Esophagus squamous epithelium (tissue), 5 donors: ENCODE measurements at regions of chr4 and their contacts with region 1.

Region 1: GRCh38 chr4:78517050-78517652 is 34.4 kb upstream of the ANXA3 start:
- DNase-seq: no peak
- H3K4me3 ChIP-seq: no peak overlapping the region
- H3K27ac ChIP-seq: no peak overlapping the region
- H3K4me1 ChIP-seq: peaks cover 0 to 6% (median 0%) of the 10 kb centered on the region in 3 donors
- H3K27me3 ChIP-seq: no peaks in the 10 kb centered on the region
- CTCF ChIP-seq: peak; percentile 19 to 71 (median 48)
- POLR2A ChIP-seq: no peak

Region 2: DNA sequence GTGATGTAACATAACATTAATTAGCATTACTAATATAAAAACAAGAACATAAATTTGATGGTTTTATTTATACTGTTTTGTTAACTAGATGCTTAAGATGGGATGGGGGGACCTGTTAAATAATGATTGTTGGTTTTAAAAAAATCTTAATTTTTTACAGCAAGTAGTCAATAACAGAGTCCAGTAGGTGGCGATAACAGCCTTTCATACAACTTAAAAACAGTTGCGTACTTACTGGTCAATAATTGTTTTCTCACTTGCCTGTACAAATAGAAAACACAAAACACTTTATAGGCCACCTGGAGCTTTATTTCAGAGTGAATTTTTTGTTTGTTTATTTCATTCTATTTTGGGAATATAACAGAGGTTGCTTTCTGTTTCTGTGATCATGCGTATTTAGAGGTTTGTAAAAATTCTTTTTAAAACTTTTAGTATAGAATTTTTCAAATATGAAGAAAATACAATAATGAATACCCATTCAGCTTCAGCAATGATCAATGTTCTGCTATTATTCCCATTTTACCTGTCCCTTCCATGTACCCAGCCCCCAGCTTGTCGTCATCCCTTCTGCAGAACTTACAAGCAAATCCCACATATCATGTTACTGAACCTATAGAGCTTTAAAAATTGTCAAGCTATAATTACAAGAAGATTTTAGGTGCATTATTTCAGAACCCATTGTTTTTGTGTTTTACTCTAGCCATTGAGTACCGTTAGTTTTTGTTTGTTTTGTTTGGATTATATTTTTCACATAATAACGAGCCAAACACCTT is 557.4 kb before region 1 on chr4:
- intact Hi-C with region 1: loop called (anchors 10 kb)
- DNase-seq: no peak
- H3K4me3 ChIP-seq: no peak overlapping the region
- H3K27ac ChIP-seq: no peak overlapping the region
- H3K4me1 ChIP-seq: no peaks in the 10 kb centered on the region
- H3K27me3 ChIP-seq: no peaks in the 10 kb centered on the region
- CTCF ChIP-seq: peak in 5 of 6 experiments; percentile 27 to 77 (median 57)
- POLR2A ChIP-seq: no peak

Region 3: GRCh38 chr4:78061939-78062570 is 455.1 kb before region 1 on chr4:
- intact Hi-C with region 1: loop called (anchors 10 kb)
- DNase-seq: no peak
- H3K4me3 ChIP-seq: no peak overlapping the region
- H3K27ac ChIP-seq: peak overlapping the region in 2 of 4 donors; percentile 20 to 25
- H3K4me1 ChIP-seq: peaks cover 13 to 45% (median 26%) of the 10 kb centered on the region in 3 donors
- H3K27me3 ChIP-seq: peaks cover 0 to 28% (median 0%) of the 10 kb centered on the region in 4 donors
- CTCF ChIP-seq: no peak
- POLR2A ChIP-seq: no peak

Region 4: DNA sequence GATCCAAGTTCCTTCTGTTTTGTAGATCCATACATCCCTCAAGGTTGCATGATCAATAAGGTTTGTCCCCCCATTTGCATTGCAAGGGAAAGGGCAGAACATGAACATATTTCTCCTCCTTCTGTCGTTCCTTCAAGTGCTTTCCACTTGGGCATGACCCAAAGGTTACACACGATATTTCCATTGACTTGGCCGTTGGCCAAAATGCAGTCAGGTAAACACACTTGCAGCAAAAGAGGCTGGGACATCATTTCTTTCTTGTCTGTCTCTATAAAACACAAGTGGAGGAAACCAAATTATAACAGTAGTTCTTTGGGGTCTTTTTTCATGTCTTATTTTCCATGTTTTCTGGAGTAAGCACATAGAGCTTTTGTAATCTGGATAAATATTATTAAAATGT is 303.9 kb before region 1 on chr4:
- intact Hi-C with region 1: no loop called
- DNase-seq: no peak
- H3K4me3 ChIP-seq: no peak overlapping the region
- H3K27ac ChIP-seq: no peak overlapping the region
- H3K4me1 ChIP-seq: peaks cover 0 to 21% (median 0%) of the 10 kb centered on the region in 3 donors
- H3K27me3 ChIP-seq: no peaks in the 10 kb centered on the region
- CTCF ChIP-seq: no peak
- POLR2A ChIP-seq: no peak

Region 5: GRCh38 chr4:78293821-78294301 is 223.3 kb before region 1 on chr4:
- intact Hi-C with region 1: no loop called
- DNase-seq: no peak
- H3K4me3 ChIP-seq: no peak overlapping the region
- H3K27ac ChIP-seq: no peak overlapping the region
- H3K4me1 ChIP-seq: peaks cover 0 to 16% (median 0%) of the 10 kb centered on the region in 3 donors
- H3K27me3 ChIP-seq: no peaks in the 10 kb centered on the region
- CTCF ChIP-seq: no peak
- POLR2A ChIP-seq: no peak

Region 6: DNA sequence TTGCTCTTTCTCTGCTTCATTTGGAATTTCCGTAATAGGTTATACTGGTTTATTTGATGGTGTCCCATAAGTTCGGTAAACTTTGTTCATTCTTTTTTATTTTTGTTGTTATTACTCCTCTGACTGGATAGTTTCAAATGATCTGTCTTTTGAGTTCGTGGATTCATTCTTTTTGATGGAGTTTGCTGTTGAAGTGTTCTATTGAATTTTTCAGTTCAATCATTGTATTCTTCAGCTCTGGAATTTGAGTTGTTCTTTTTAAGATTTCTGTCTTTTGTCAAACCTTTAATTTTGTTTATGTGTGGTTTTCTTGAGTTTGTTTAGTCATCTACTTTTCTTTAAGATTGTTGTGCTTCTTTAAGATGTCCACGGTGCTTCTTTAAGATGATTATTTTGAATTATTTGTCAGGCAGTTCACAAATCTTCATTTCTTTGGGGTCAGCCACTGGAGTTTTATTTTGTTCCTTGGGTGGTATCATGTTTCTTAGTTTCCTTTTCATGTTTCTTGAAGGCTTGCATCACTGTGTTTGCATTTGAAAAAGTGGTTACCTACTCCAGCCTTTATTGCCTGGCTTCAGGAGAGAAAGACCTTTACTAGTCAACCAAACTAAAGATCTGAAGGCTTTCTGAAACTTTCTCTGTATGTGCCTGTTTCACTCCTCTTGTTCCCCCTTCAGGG is 120.4 kb before region 1 on chr4:
- intact Hi-C with region 1: no loop called
- DNase-seq: no peak
- H3K4me3 ChIP-seq: no peak overlapping the region
- H3K27ac ChIP-seq: no peak overlapping the region
- H3K4me1 ChIP-seq: no peaks in the 10 kb centered on the region
- H3K27me3 ChIP-seq: no peaks in the 10 kb centered on the region
- CTCF ChIP-seq: no peak
- POLR2A ChIP-seq: no peak

Region 7: GRCh38 chr4:79088946-79089691 is 572.0 kb after region 1 on chr4:
- intact Hi-C with region 1: no loop called
- DNase-seq: no peak
- H3K4me3 ChIP-seq: no peak overlapping the region
- H3K27ac ChIP-seq: no peak overlapping the region
- H3K4me1 ChIP-seq: no peaks in the 10 kb centered on the region
- H3K27me3 ChIP-seq: no peaks in the 10 kb centered on the region
- CTCF ChIP-seq: no peak
- POLR2A ChIP-seq: no peak